Calu3 (cell line): ENCODE measurements at regions of chr1 and their contacts with region 1.

Region 1: GRCh38 chr1:244163861-244164562 is 112.9 kb downstream of the ZBTB18 start:
- DNase-seq: peak; percentile 67
- H3K4me3 Mint-ChIP-seq: no peak overlapping the region
- H3K27ac Mint-ChIP-seq: no peak overlapping the region
- H3K4me1 Mint-ChIP-seq: peaks cover 21% of the 10 kb centered on the region
- H3K27me3 Mint-ChIP-seq: no peaks in the 10 kb centered on the region
- CTCF ChIP-seq: no peak

Region 2: DNA sequence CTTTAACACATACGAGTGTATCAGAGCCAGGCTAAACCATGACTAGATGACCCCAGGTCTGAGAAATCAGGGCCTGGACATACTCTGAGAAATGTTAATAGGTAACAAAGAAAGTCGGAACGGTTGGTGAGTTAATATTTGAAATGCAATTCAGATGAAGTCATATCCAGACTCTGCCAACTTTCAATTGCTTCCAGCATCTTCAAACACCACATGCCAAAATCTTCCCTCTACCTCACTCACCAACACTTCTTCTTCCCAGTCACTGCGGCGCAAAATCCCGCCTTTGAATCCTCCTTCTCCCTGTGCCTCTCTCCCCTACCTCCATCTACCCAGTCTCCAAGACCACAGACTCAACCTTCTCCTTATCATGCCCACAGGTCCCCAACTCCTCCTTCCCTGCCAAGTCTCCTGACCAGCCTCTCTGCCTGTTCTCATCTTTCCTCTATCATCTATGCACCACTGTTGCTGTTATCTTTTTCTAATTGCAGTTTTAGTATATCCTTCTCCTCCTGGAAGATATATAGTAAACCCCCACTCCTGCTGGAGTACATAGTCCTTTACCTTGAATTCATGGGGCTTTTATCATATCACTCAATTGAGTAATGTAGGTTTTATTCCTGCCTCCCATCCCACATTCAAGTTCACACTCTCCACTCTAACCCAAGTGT is 71.6 kb before region 1 on chr1:
- CTCF ChIA-PET with region 1: interaction called, 4 read pairs
- intact Hi-C with region 1: loop called (anchors 5 kb)
- DNase-seq: peak; percentile 24
- H3K4me3 Mint-ChIP-seq: peak overlapping the region; percentile 26
- H3K27ac Mint-ChIP-seq: peak overlapping the region; percentile 39
- H3K4me1 Mint-ChIP-seq: peaks cover 34% of the 10 kb centered on the region
- H3K27me3 Mint-ChIP-seq: no peaks in the 10 kb centered on the region
- CTCF ChIP-seq: no peak

Region 3: DNA sequence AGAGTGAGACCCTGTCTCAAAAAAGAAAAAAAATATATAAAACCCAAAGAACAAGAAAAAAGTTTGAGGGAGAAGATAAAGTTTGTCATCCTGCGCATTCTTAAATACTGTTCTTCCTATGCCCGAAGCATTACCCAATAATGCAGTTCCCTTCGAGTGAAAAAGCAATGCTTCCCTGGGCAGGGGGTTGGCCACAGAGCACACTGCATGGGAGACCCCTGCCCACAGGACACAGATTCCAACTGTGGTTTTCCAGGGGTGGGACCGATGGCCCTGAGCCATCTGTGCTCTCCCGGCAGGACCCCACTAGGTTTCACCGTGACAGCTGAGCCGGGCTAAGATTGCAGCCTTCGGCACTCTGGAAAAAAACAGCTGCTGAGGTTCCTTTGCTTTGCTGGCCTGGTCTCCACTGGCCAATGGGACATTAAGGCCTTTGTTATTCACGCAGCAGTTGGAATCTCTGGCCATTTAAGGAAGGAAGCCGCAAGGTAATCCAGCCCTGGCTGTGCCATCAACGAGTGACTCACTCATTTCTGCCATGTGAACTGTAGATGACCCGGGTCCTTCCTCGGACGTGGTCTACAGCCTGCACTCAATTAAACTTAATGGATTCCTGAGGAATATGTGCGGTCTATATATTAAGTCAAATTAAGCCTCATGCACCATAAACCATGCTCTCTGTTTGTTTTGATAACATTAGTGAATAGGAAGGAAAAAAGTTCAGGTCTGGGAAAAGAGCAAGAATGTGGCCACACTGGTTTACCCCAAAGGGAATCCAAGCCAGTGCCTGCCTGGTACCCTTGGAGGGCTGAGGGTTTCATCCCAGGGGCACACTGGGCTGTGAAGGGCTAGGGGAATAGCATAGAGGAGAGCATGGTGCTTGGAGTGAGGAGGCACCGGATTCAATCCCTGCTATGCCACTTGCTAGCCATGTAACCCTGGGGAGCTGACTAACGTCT is 50.3 kb after region 1 on chr1:
- CTCF ChIA-PET with region 1: no interaction called
- intact Hi-C with region 1: loop called (anchors 1 kb)
- DNase-seq: peak; percentile 85
- H3K4me3 Mint-ChIP-seq: peak overlapping the region; percentile 25
- H3K27ac Mint-ChIP-seq: peak overlapping the region; percentile 86
- H3K4me1 Mint-ChIP-seq: peaks cover 29% of the 10 kb centered on the region
- H3K27me3 Mint-ChIP-seq: no peaks in the 10 kb centered on the region
- CTCF ChIP-seq: no peak